MCF 10A (cell line): ENCODE measurements at regions of chr2 and their contacts with region 1.

Region 1: DNA sequence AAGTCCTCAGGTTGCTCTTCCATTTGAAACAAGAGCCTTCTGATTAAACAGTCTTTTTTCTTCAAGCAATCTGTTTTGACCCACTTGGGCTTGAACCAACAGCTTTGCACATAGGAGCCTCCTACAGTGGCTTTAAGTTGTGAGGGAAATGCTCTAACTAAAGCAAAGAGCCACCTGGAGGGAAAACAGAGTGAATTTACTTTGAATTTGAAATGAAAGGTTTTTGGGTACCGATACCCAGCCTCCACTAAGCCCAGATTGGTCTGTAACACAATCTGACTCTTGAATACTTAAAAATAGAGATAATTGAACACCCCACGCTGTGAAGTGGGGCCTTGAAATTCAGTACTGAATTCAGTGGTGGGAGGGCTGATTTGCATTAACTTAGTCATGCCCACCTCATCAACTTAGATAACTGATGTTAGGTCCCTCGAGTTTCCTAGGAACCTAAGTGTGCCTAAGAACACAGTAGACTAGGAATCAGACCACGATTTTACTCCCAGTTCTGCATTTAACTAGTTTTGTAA is 56.3 kb upstream of the ACVR1C start:
- DNase-seq: no peak
- H3K4me3 Mint-ChIP-seq: no peak overlapping the region
- H3K27ac Mint-ChIP-seq: no peak overlapping the region
- H3K4me1 Mint-ChIP-seq: no peaks in the 10 kb centered on the region
- H3K27me3 Mint-ChIP-seq: no peaks in the 10 kb centered on the region
- CTCF ChIP-seq: no peak

Region 2: DNA sequence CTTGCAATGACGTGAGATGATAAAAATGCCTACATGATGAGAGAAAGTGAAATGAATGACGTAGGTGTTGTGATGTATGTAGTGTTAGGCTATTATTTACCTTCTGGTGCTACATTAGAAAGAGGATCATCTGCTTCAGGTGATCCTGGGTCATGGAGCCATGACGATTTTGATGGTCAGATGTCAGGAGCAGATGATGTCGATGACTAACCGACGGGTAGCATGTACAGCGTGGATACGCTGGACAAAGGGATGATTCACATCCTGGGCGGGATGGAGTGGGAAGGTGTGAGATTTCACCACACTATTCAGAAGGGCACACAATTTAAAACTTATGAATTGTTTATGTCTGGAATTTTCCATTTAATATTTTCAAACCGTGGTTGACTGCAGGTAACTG is 12.9 kb before region 1 on chr2:
- CTCF ChIA-PET with region 1: interaction called, 10 read pairs
- POLR2A ChIA-PET with region 1: no interaction called
- intact Hi-C with region 1: no loop called
- DNase-seq: peak; percentile 77
- H3K4me3 Mint-ChIP-seq: no peak overlapping the region
- H3K27ac Mint-ChIP-seq: peak overlapping the region; percentile 61
- H3K4me1 Mint-ChIP-seq: peaks cover 7% of the 10 kb centered on the region
- H3K27me3 Mint-ChIP-seq: no peaks in the 10 kb centered on the region
- CTCF ChIP-seq: no peak